Natural killer cell (primary cell): ENCODE measurements at regions of chr9 and their contacts with region 1.

Region 1: GRCh38 chr9:105694190-105694847 is at the start of gene TMEM38B:
- DNase-seq: peak; percentile 79 to 93
- ATAC-seq: peak; percentile 81 to 92 (median 89)
- H3K4me3 ChIP-seq: peak within 1 kb of the TSS; percentile 73
- H3K4me3 Mint-ChIP-seq: peak within 1 kb of the TSS; percentile 83
- H3K27ac ChIP-seq: peak within 1 kb of the TSS; percentile 50
- H3K27ac Mint-ChIP-seq: peak within 1 kb of the TSS; percentile 27 to 84
- H3K4me1 ChIP-seq: peaks cover 7% of the 10 kb centered on the region
- H3K4me1 Mint-ChIP-seq: peaks cover 18 to 19% of the 10 kb centered on the region in 2 donors
- H3K27me3 ChIP-seq: peaks cover 18% of the 10 kb centered on the region
- H3K27me3 Mint-ChIP-seq: peaks cover 23 to 26% of the 10 kb centered on the region in 2 donors
- CTCF ChIP-seq: no peak
- total RNA-seq, gene TMEM38B: 5.7 to 8.0 (median 8.0) TPM

Region 2: DNA sequence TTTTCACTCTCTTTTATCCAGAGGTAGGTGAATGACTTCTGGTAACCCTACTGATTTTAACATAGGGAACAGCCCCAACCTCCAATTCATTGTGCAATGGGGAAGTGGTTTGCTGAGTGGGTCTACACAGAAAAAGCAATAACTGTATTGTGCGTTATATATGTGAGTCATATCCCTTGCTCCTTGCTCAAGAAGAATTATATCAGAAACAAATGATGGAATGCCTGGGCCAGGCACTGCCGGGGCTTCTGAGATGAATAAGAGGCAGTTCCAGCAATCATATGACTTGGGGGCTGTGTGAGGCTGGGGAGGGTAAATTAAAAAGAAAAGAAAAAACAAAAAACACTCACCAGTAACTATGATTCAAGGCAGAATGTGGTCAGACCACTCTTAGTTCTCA is 687.2 kb before region 1 on chr9:
- intact Hi-C with region 1: no loop called
- DNase-seq: no peak
- ATAC-seq: peak in 2 of 3 donors; percentile 37 to 84
- H3K4me3 ChIP-seq: no peak overlapping the region
- H3K4me3 Mint-ChIP-seq: no peak overlapping the region
- H3K27ac ChIP-seq: no peak overlapping the region
- H3K27ac Mint-ChIP-seq: peak overlapping the region in 1 of 2 donors; percentile 16
- H3K4me1 ChIP-seq: no peaks in the 10 kb centered on the region
- H3K4me1 Mint-ChIP-seq: peaks cover 0 to 7% of the 10 kb centered on the region in 2 donors
- H3K27me3 ChIP-seq: no peaks in the 10 kb centered on the region
- H3K27me3 Mint-ChIP-seq: no peaks in the 10 kb centered on the region
- CTCF ChIP-seq: no peak

Region 3: DNA sequence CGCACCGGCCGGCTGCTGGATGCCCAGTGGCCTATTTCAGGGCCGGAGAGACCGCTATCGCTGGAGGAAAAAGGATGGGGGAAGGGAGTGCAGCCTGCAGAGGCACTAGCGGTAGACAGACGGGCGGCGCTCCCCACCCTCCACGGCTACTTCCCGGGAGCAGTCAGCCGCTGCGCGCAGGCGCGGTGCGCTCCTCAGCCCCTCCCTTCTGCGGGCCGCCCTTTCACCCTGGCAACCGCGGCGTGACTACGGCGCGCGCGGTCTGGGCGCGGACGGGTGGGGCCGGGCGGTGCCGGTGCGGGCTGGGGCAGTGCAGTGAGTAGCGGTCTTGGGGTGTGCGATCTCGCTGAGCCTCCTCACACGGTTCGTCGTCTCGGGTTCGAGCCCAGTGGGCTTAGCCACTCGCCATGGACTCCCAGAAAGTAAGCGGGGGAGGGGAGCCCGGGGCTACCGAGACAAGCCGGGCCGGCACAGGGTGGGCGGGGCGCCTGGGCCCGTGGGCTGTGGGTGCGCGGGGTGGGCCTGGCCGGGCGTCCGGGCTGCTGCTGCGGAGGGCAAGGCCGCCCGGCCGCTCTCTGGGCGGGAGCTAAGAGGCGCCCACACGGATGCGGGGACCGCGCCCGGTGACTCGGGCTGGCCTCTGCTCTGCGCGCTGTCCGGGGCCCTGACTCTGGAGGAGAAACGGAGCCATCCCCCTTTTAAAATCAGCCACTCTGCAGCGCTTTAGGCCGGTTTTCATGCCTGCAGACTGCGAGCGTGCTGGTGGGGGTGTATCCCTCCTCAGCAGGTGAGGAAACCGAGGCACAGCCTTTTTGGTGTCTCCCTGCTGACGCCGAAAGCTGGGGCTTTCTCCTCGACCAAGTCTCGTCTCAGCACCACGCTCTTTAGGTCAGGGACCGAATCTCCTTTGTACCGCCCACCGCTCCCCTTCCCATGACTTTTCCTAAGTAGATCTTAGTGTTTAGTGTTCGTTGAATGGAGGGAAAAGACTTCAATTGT is 246.2 kb before region 1 on chr9 and contains the start of gene FSD1L:
- intact Hi-C with region 1: loop called (anchors 5 kb)
- DNase-seq: peak; percentile 60 to 89
- ATAC-seq: peak; percentile 89 to 91 (median 91)
- H3K4me3 ChIP-seq: peak within 1 kb of the TSS; percentile 52
- H3K4me3 Mint-ChIP-seq: peak within 1 kb of the TSS; percentile 80
- H3K27ac ChIP-seq: no peak within 1 kb of the TSS
- H3K27ac Mint-ChIP-seq: peak within 1 kb of the TSS in 1 of 2 donors; percentile 75
- H3K4me1 ChIP-seq: peaks cover 12% of the 10 kb centered on the region
- H3K4me1 Mint-ChIP-seq: peaks cover 0 to 12% of the 10 kb centered on the region in 2 donors
- H3K27me3 ChIP-seq: no peaks in the 10 kb centered on the region
- H3K27me3 Mint-ChIP-seq: peaks cover 0 to 10% of the 10 kb centered on the region in 2 donors
- CTCF ChIP-seq: no peak
- total RNA-seq, gene FSD1L: 2.0 to 4.2 (median 2.1) TPM